ENCODE measurements at regions of chr4 and their contacts with region 1.

Region 1: GRCh38 chr4:160347197-160347596 is 1244.3 kb downstream of the RAPGEF2 start:
- DNase-seq: no peak
- H3K4me3 ChIP-seq: no peak overlapping the region
- H3K27ac ChIP-seq: no peak overlapping the region
- H3K27me3 ChIP-seq: no peaks in the 10 kb centered on the region
- CTCF ChIP-seq: no peak

Region 2: GRCh38 chr4:160044693-160045092 is 302.5 kb before region 1 on chr4:
- CTCF ChIA-PET with region 1: interaction called, 10 read pairs
- POLR2A ChIA-PET with region 1: no interaction called
- DNase-seq: no peak
- H3K4me3 ChIP-seq: no peak overlapping the region
- H3K27ac ChIP-seq: no peak overlapping the region
- H3K27me3 ChIP-seq: no peaks in the 10 kb centered on the region
- CTCF ChIP-seq: no peak

Measured in AG04450 (cell line).